H1 (cell line): ENCODE measurements at regions of chr7 and their contacts with region 1.

Region 1: DNA sequence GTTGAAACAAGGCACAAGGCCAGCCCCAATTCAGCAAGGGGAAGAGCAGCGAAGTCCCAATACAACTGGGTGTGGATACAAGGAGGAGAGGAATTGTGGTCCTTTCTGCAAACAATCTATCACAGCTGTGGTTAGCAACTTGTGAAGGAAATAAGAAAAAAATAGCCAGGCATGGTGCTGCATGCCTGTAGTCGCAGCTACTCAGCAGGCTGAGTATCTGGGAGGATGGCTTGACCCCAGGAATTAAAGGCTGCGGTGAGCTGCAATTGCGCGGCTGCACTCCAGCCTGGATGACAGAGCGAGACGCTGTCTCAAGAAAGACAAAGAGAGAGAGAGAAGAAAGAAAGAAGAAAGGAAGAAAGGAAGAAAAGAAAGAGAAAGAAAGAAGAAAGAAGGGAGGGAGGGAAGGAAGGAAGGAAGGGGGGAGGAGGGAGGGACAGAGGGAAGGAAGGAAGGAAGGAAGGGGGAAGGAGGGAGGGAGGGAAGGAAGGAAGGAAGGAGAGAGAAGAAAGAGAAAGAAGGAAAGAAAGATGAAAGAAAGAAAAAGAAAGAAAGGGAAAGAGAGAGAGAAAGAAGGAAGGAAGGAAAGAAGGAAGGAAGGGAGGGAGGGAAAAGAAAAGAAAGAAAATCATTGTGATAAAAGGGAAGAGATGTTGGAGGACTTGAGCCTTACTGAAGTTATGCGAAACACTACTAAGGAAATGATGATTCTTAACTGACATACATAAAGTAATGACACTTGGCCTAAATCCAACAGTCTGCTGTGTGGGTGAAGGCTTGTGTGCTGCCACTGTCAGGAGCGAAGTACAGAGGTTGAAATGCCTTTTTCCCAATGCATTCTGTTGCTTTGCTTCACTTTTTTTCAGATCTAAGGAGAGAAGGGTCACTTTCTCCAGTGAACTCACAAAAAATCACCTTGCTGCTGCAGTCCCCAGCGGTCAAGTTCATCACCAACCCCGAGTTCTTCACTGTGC is 117.0 kb upstream of the STK17A start:
- DNase-seq: peak in 1 of 2 experiments; percentile 32
- H3K4me3 ChIP-seq: no peak overlapping the region
- H3K27ac ChIP-seq: no peak overlapping the region
- H3K4me1 ChIP-seq: peaks cover 3 to 13% (median 8%) of the 10 kb centered on the region in 4 experiments; a peak in 6 of 7 replicates
- H3K27me3 ChIP-seq: no peaks in the 10 kb centered on the region
- CTCF ChIP-seq: no peak
- EP300 ChIP-seq: no peak
- POLR2A ChIP-seq: no peak
- RAD21 ChIP-seq: no peak

Region 2: DNA sequence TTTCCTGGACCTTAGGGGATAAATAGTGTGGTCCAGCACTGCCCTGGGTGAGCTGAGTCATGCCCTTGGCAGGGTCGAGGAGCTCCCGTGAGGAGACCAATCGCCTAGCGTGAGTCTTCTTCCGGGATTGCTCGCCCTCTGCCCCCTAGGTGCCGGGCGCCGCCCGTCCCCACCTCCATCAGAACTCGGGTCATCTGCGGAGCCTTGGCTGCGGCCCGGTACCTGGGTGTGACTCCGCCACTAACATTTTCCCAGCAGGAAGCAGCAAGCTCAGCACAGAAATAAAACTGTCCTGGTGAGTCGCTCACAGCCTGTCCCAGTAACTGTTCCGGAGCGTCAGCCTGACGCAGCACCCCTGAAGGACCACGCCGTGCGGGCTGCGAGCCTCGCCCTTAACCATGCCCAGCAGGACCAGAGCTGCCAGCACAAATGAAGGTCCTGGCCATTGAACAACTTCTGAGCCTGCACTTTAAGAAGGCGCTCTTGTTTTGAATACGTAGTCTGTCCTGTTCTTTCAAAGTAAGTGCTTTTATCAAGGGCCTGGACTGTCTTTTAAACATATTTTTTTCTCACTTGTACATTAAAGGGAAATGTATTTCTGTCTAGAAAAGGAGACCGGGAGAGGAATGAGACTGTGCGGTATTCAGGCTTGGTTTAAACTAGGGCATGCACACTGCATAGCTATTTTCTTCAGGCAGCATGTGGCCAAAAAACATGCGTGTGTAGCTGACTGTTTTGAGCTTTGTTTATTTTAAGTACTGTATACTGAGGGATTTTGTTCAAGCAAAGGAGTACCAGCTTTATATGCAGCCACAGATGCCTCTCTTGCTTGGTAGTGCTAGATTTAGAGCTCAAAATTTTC is 216.7 kb before region 1 on chr7:
- CTCF ChIA-PET with region 1: no interaction called
- POLR2A ChIA-PET with region 1: no interaction called
- DNase-seq: no peak
- H3K4me3 ChIP-seq: no peak overlapping the region
- H3K27ac ChIP-seq: peak overlapping the region; percentile 40; the same call in 1 of the 2 replicates
- H3K4me1 ChIP-seq: peaks cover 0 to 6% (median 2%) of the 10 kb centered on the region in 4 experiments; a peak in 3 of 7 replicates
- H3K27me3 ChIP-seq: no peaks in the 10 kb centered on the region
- CTCF ChIP-seq: no peak
- EP300 ChIP-seq: no peak
- POLR2A ChIP-seq: no peak
- RAD21 ChIP-seq: no peak

Region 3: DNA sequence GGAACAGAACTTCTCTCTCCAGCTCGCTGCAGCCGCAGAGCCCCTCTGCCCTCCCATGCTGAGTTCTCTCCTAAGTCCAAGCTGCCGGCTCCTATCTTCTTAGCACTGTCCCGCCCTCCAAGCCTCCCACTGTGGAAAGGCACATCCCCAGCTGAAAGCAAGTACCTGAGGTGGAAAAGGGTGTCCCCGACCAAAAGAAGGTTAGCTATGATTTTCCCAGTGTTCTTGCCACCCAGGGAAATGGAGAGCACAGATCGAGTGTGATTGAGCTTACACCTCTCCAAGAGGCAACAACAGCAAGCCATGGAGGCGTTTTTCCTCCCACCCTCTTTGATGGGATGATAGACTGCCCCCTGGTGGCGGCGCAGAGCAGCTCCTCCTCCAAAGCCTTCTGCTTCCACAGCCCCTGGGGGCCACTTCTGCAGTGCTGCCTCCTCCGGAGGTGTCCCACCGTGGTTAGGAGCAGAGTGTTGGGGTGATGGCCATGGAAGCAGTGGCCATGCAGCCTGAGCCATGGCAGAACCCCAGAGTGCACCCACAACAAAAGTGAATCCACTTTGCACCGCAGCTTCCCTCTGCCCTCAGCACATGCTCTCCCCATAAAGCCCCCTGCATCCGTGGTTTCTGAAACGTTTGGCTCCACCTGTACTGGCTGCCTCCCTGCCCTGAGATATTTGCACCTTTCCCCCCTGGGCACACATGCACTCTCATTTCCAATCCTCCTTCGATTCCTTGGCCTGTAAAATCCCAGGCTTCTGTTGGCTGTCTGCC is 26.1 kb before region 1 on chr7:
- CTCF ChIA-PET with region 1: no interaction called
- POLR2A ChIA-PET with region 1: no interaction called
- DNase-seq: peak; percentile 77 to 85
- H3K4me3 ChIP-seq: no peak overlapping the region
- H3K27ac ChIP-seq: no peak overlapping the region
- H3K4me1 ChIP-seq: peaks cover 0 to 3% (median 1%) of the 10 kb centered on the region in 4 experiments; a peak in 2 of 7 replicates
- H3K27me3 ChIP-seq: no peaks in the 10 kb centered on the region
- CTCF ChIP-seq: peak; percentile 91 to 95 (median 91)
- EP300 ChIP-seq: no peak
- POLR2A ChIP-seq: no peak
- RAD21 ChIP-seq: peak; percentile 85 to 90

Region 4: GRCh38 chr7:43454936-43455518 is 10.8 kb before region 1 on chr7:
- CTCF ChIA-PET with region 1: interaction called, 10 read pairs
- POLR2A ChIA-PET with region 1: no interaction called
- DNase-seq: no peak
- H3K4me3 ChIP-seq: no peak overlapping the region
- H3K27ac ChIP-seq: no peak overlapping the region
- H3K4me1 ChIP-seq: peaks cover 0 to 3% (median 2%) of the 10 kb centered on the region in 4 experiments; a peak in 4 of 7 replicates
- H3K27me3 ChIP-seq: no peaks in the 10 kb centered on the region
- CTCF ChIP-seq: peak in 2 of 3 experiments; percentile 37 to 46; a peak in 2 of 4 replicates
- EP300 ChIP-seq: no peak
- POLR2A ChIP-seq: no peak
- RAD21 ChIP-seq: peak; percentile 68 to 71

Region 5: GRCh38 chr7:43487731-43488073 is 21.8 kb after region 1 on chr7:
- CTCF ChIA-PET with region 1: no interaction called
- POLR2A ChIA-PET with region 1: no interaction called
- DNase-seq: no peak
- H3K4me3 ChIP-seq: no peak overlapping the region
- H3K27ac ChIP-seq: no peak overlapping the region
- H3K4me1 ChIP-seq: peaks cover 0 to 3% (median 0%) of the 10 kb centered on the region in 4 experiments; a peak in 1 of 7 replicates
- H3K27me3 ChIP-seq: no peaks in the 10 kb centered on the region
- CTCF ChIP-seq: no peak
- EP300 ChIP-seq: no peak
- POLR2A ChIP-seq: no peak
- RAD21 ChIP-seq: no peak

Region 6: GRCh38 chr7:43575506-43575905 is 109.6 kb after region 1 on chr7:
- CTCF ChIA-PET with region 1: no interaction called
- POLR2A ChIA-PET with region 1: no interaction called
- DNase-seq: no peak
- H3K4me3 ChIP-seq: no peak overlapping the region
- H3K27ac ChIP-seq: no peak overlapping the region
- H3K4me1 ChIP-seq: peaks cover 0 to 3% (median under 1%) of the 10 kb centered on the region in 4 experiments; a peak in 1 of 7 replicates
- H3K27me3 ChIP-seq: no peaks in the 10 kb centered on the region
- CTCF ChIP-seq: no peak
- EP300 ChIP-seq: no peak
- POLR2A ChIP-seq: no peak
- RAD21 ChIP-seq: no peak